Left ventricle myocardium inferior (tissue), 1 donor: ENCODE measurements at regions of chr18 and their contacts with region 1.

Region 1: GRCh38 chr18:31010601-31011000 is 31.9 kb downstream of the DSC3 start:
- DNase-seq: no peak
- H3K4me3 ChIP-seq: no peak overlapping the region
- H3K27ac ChIP-seq: no peak overlapping the region
- H3K4me1 ChIP-seq: no peaks in the 10 kb centered on the region
- H3K27me3 ChIP-seq: no peaks in the 10 kb centered on the region
- CTCF ChIP-seq: no peak

Region 2: DNA sequence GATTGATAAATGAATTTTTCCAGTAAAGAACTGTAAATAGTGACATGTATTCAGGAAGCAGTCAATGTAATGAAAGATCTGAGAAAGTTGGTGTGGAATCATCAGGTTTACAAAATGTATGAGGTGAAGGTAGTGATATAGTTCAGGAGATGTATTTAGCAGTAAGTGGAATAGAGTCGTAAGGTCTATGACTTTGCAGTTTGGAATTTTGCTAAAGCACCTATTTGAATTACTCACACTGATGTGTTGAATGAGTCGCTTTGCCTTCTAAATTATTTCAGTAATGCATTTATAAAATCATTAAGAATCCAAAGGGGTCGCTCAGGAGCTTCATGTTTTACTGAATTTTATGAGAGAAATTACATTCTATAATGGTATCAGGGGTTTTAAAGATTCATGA is 681.8 kb before region 1 on chr18:
- intact Hi-C with region 1: no loop called
- DNase-seq: no peak
- H3K4me3 ChIP-seq: no peak overlapping the region
- H3K27ac ChIP-seq: no peak overlapping the region
- H3K4me1 ChIP-seq: no peaks in the 10 kb centered on the region
- H3K27me3 ChIP-seq: no peaks in the 10 kb centered on the region
- CTCF ChIP-seq: no peak

Region 3: GRCh38 chr18:31077878-31078277 is 67.3 kb after region 1 on chr18:
- intact Hi-C with region 1: loop called (anchors 10 kb)
- DNase-seq: no peak
- H3K4me3 ChIP-seq: no peak overlapping the region
- H3K27ac ChIP-seq: no peak overlapping the region
- H3K4me1 ChIP-seq: no peaks in the 10 kb centered on the region
- H3K27me3 ChIP-seq: no peaks in the 10 kb centered on the region
- CTCF ChIP-seq: no peak